Dendritic cell treated with granulocyte-macrophage colony-stimulating factor and Interleukin-4, amounts not matched to agents 40 ng/mL and 50 ng/mL, for 4 days (primary cell): ENCODE measurements at regions of chr1 and their contacts with region 1.

Region 1: GRCh38 chr1:192477630-192478029 is 97.9 kb upstream of the RGS1 start:
- H3K4me3 Mint-ChIP-seq: no peak overlapping the region
- H3K27ac Mint-ChIP-seq: no peak overlapping the region
- H3K4me1 Mint-ChIP-seq: peaks cover 9% of the 10 kb centered on the region
- H3K27me3 Mint-ChIP-seq: peaks cover 2% of the 10 kb centered on the region

Region 2: GRCh38 chr1:192516776-192517297 is 39.2 kb after region 1 on chr1:
- intact Hi-C with region 1: loop called (anchors 5 kb)
- H3K4me3 Mint-ChIP-seq: peak overlapping the region; percentile 54
- H3K27ac Mint-ChIP-seq: peak overlapping the region; percentile 79
- H3K4me1 Mint-ChIP-seq: peaks cover 42% of the 10 kb centered on the region
- H3K27me3 Mint-ChIP-seq: no peaks in the 10 kb centered on the region

Region 3: DNA sequence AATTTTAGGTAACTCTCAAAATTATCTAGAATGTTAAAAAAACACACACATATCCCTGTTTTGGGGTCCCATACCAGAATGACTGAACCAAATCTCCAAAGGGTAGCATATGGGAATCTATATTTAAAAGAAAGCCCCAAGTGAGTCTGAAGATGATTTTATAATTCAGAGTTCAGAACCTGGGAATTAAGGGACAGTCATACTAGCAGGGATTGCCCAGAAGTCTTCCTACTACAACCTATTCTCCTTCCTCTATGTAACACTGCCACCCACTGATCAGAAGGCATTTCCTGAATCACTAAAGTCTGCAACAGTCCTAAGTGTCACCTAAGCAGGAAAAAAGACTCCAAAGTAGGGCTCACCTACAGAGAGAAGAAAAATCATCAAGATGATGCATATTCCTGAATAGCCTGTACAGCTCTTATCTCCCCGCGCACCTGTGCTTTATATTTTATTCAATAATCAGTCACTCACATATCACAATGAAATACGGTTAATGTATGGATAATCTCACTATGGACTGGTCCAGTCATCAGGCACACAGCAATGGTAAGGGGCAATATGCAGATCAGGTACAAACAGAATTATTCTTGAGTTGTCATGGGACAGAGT is 102.8 kb after region 1 on chr1:
- intact Hi-C with region 1: loop called (anchors 1 kb)
- H3K4me3 Mint-ChIP-seq: no peak overlapping the region
- H3K27ac Mint-ChIP-seq: no peak overlapping the region
- H3K4me1 Mint-ChIP-seq: peaks cover 6% of the 10 kb centered on the region
- H3K27me3 Mint-ChIP-seq: no peaks in the 10 kb centered on the region

Region 4: GRCh38 chr1:192609110-192610079 is 131.8 kb after region 1 on chr1:
- intact Hi-C with region 1: loop called (anchors 1 kb)
- H3K4me3 Mint-ChIP-seq: peak overlapping the region; percentile 9
- H3K27ac Mint-ChIP-seq: peak overlapping the region; percentile 56
- H3K4me1 Mint-ChIP-seq: peaks cover 21% of the 10 kb centered on the region
- H3K27me3 Mint-ChIP-seq: peaks cover 10% of the 10 kb centered on the region

Region 5: GRCh38 chr1:192797891-192798290 is 320.3 kb after region 1 on chr1:
- intact Hi-C with region 1: loop called (anchors 5 kb)
- H3K4me3 Mint-ChIP-seq: no peak overlapping the region
- H3K27ac Mint-ChIP-seq: peak overlapping the region; percentile 52
- H3K4me1 Mint-ChIP-seq: peaks cover 13% of the 10 kb centered on the region
- H3K27me3 Mint-ChIP-seq: no peaks in the 10 kb centered on the region

Region 6: DNA sequence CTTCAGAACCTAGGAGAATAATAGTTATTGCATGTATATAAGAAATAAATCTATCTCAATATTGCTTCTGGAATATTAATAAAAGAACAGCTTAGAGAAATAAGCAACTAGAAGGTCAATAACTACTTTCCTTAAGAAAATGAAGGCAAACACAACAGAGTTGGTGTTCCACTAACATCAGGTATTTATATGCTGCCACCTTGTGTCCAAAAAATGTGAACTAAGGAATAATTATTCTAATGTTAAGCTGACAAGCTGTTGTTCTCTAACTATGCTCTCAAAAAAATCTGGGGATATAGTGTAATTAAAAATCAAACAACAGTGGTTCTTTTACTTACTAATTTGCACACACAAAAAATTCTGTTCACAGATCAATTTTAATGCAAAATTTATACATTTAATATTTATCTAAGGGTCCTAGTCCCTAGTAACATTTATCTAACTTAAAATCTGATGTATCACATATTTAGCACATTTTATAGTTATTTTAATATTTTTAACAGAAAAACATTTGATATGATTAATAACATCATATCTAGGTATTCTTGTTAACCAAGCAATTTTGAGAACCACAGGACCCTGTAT is 541.9 kb after region 1 on chr1:
- intact Hi-C with region 1: loop called (anchors 5 kb)
- H3K4me3 Mint-ChIP-seq: no peak overlapping the region
- H3K27ac Mint-ChIP-seq: no peak overlapping the region
- H3K4me1 Mint-ChIP-seq: no peaks in the 10 kb centered on the region
- H3K27me3 Mint-ChIP-seq: no peaks in the 10 kb centered on the region

Region 7: GRCh38 chr1:193121616-193122593 is 644.3 kb after region 1 on chr1 and contains the start of gene CDC73:
- intact Hi-C with region 1: loop called (anchors 10 kb)
- H3K4me3 Mint-ChIP-seq: peak within 1 kb of the TSS; percentile 78
- H3K27ac Mint-ChIP-seq: peak within 1 kb of the TSS; percentile 94
- H3K4me1 Mint-ChIP-seq: peaks cover 43% of the 10 kb centered on the region
- H3K27me3 Mint-ChIP-seq: peaks cover 4% of the 10 kb centered on the region